GM13977 (cell line): ENCODE measurements at regions of chr6 and their contacts with region 1.

Region 1: DNA sequence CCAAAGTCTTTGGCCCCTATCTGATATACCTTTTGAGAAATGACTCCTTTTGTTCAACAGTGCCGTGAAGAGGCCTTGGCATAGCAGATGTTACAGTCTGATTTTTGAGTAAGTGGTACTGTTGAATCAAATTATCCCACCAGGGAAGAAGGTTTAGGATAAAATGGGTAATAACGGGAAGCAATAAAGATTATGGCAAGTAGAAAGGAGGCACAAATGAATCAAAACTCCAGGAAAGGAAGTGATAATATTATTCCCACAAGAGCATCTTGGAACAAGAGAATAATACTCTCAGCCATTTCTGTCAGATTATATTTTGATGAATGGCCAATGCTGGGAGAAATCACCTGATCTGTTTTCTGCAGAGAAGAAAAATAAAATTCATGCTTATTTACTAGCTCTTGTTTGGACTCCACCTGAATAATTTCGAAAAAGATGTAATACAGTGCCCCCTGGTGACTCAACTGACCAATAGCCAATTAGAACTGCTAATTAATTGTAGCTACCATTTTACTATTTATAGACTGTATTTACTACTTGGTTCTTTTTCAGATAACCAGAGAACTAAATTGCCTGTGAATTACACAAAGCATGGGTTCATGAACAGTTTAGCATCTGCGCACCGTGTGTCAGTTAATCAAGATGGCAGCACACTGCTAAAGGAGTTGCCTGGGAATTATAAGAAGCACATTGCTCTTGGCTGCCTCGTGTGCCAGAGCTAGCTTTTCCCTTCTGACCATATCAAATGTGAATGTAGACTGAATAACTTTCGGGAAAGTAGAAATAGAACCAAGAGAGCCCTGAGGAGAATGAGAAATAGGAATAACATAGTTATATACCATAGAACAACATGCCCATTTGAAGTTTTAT is 78.5 kb upstream of the TRDN start:
- DNase-seq: no peak
- CTCF ChIP-seq: peak; percentile 71

Region 2: DNA sequence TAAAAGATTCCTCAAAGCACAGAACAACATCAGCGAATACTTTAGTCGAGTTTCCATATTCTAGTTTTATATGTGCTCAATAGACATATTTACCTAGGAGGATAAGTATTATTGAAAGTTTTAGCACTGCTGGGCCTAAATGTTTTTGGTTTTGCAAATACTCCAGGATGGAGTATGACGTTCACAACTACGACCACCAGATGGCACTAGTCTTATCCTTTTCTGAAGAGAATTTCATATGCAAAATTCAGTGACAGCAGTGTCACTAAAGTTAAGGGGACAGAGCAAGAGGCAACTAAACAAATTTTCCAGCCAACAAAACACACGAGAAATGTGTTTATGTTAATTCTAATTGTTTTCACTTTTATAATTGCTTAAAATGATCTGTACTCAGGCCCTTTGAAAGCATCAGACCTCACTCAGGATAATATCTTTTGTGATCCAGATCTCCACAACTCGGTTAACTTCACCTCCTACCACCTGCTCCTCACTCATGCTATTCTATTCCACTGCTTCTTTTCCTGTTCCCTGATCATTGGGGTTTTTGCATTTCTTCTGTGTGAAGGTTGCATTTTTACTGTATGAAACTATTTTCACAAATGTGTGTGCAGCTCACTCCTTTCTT is 299.3 kb before region 1 on chr6:
- in situ Hi-C with region 1: loop called (anchors 25 kb)
- DNase-seq: peak; percentile 24
- CTCF ChIP-seq: peak; percentile 67